ENCODE measurements at regions of chr17 and their contacts with region 1.

Region 1: GRCh38 chr17:74478420-74479100 is 12.1 kb downstream of the CD300A start:
- DNase-seq: peak; percentile 89
- H3K4me3 Mint-ChIP-seq: peak overlapping the region; percentile 60
- H3K27ac Mint-ChIP-seq: peak overlapping the region; percentile 76
- H3K4me1 Mint-ChIP-seq: peaks cover 61% of the 10 kb centered on the region
- H3K27me3 Mint-ChIP-seq: no peaks in the 10 kb centered on the region

Region 2: DNA sequence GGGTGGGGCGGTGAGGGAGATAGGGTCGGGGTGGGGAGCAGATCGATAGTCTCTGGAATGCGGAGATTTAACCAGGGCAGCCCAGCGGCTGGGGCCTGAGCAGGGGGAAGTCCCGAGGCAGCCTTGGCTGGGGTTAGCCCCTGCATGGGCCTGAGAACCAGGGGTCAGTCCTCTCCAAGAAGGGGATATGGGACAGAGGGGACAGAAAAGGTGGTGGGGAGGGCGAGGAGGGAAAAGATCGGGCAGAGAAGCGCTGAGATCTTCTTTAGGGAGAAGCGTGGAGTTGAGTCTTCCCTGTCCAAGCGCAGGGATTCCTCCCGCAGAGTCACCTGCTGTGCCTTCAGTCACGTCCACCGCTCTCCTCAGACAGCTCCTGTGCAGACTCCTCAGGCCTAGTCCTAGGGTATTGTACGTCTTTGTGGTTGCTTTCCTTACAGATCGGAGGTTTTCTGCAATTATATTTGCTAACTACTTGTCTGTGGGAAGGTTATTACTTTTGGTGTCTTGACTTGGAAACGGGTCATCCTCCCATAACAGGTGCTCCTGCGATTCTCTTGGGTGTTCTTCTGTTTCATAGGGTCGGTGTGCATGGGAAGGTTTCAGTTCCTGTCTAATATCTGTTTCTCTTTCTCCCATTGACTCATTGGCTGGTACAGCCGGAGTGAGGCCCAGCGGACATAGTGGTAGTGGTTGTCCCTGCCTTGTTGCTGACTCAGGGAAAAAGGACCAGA is 11.2 kb before region 1 on chr17:
- intact Hi-C with region 1: loop called (anchors 1 kb)
- DNase-seq: peak; percentile 73
- H3K4me3 Mint-ChIP-seq: no peak overlapping the region
- H3K27ac Mint-ChIP-seq: peak overlapping the region; percentile 73
- H3K4me1 Mint-ChIP-seq: peaks cover 48% of the 10 kb centered on the region
- H3K27me3 Mint-ChIP-seq: no peaks in the 10 kb centered on the region

Region 3: DNA sequence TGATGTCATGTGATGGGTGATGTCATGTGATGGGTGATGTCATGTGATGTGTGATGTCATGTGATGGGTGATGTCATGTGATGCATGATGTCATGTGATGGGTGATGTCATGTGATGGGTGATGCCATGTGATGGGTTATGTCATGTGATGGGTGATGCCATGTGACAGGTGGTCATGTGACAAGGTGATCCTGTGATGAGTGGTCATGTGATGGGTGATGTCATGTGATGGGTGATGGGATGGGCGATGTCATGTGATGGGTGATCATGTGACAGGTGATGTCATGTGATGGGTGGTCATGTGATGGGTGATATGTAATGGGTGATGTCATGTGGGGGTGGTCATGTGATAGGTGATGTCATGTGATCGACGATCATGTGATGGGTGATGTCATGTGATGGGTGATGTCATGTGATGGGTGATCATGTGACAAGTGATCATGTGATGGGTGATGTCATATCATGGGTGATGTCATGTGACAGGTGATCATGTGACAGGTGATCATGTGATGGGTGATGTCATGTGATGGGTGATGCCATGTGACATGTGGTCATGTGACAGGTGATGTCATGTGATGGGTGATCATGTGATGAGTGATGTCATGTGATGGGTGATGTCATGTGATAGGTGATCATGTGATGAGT is 35.5 kb after region 1 on chr17:
- intact Hi-C with region 1: loop called (anchors 1 kb)
- DNase-seq: peak; percentile 90
- H3K4me3 Mint-ChIP-seq: peak overlapping the region; percentile 34
- H3K27ac Mint-ChIP-seq: peak overlapping the region; percentile 94
- H3K4me1 Mint-ChIP-seq: peaks cover 27% of the 10 kb centered on the region
- H3K27me3 Mint-ChIP-seq: peaks cover 14% of the 10 kb centered on the region

Measured in activated CD4-positive, alpha-beta T cell treated with anti-CD3 and anti-CD28 coated beads, Interleukin-2, amount 10 ng/mL, durations not matched to agents 24 days and 14 days (primary cell).